ENCODE measurements at regions of chr11 and their contacts with region 1.

Region 1: GRCh38 chr11:104968355-104968855 is at the start of gene CASP4:
- DNase-seq: no peak
- H3K4me3 Mint-ChIP-seq: peak within 1 kb of the TSS; percentile 89
- H3K27ac Mint-ChIP-seq: peak within 1 kb of the TSS; percentile 92
- H3K4me1 Mint-ChIP-seq: peaks cover 36% of the 10 kb centered on the region
- H3K27me3 Mint-ChIP-seq: no peaks in the 10 kb centered on the region
- total RNA-seq, gene CASP4: 58.2 to 58.3 TPM

Region 2: GRCh38 chr11:104764710-104765045 is 203.7 kb before region 1 on chr11:
- CTCF ChIA-PET with region 1: no interaction called
- POLR2A ChIA-PET with region 1: no interaction called
- intact Hi-C with region 1: no loop called
- DNase-seq: no peak
- H3K4me3 Mint-ChIP-seq: no peak overlapping the region
- H3K27ac Mint-ChIP-seq: no peak overlapping the region
- H3K4me1 Mint-ChIP-seq: peaks cover 16% of the 10 kb centered on the region
- H3K27me3 Mint-ChIP-seq: no peaks in the 10 kb centered on the region

Region 3: DNA sequence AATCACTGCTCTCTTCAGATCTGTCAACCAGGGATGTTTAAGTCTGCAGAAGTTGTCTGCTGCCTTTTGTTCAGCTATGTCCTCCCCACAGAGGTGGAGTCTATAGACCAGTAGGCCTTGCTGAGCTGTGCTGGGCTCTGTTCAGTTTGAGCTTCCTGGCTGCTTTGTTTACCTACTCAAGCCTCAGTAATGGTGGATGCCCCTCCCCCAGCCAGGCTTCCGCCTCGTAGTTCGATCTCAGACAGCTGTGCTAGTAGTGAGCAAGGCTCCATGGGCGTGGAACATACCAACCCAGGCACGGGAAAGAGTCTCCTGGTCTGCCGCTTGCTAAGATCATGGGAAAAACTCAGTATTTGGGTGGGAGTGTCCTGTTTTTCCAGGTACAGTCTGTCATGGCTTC is 42.6 kb before region 1 on chr11:
- CTCF ChIA-PET with region 1: no interaction called
- POLR2A ChIA-PET with region 1: no interaction called
- intact Hi-C with region 1: no loop called
- DNase-seq: no peak
- H3K4me3 Mint-ChIP-seq: no peak overlapping the region
- H3K27ac Mint-ChIP-seq: no peak overlapping the region
- H3K4me1 Mint-ChIP-seq: no peaks in the 10 kb centered on the region
- H3K27me3 Mint-ChIP-seq: no peaks in the 10 kb centered on the region

Region 4: GRCh38 chr11:105081412-105082087 is 113.1 kb after region 1 on chr11:
- CTCF ChIA-PET with region 1: no interaction called
- POLR2A ChIA-PET with region 1: no interaction called
- intact Hi-C with region 1: no loop called
- DNase-seq: no peak
- H3K4me3 Mint-ChIP-seq: no peak overlapping the region
- H3K27ac Mint-ChIP-seq: no peak overlapping the region
- H3K4me1 Mint-ChIP-seq: peaks cover 27% of the 10 kb centered on the region
- H3K27me3 Mint-ChIP-seq: no peaks in the 10 kb centered on the region

Region 5: GRCh38 chr11:105297463-105297862 is 329.1 kb after region 1 on chr11:
- CTCF ChIA-PET with region 1: no interaction called
- POLR2A ChIA-PET with region 1: no interaction called
- intact Hi-C with region 1: loop called (anchors 10 kb)
- DNase-seq: no peak
- H3K4me3 Mint-ChIP-seq: no peak overlapping the region
- H3K27ac Mint-ChIP-seq: peak overlapping the region; percentile 58
- H3K4me1 Mint-ChIP-seq: peaks cover 24% of the 10 kb centered on the region
- H3K27me3 Mint-ChIP-seq: peaks cover 3% of the 10 kb centered on the region